ENCODE measurements at regions of chr16 and their contacts with region 1.

Region 1: GRCh38 chr16:28193530-28194423 is 18.0 kb downstream of the XPO6 start:
- DNase-seq: peak; percentile 56
- ATAC-seq: peak; percentile 26
- H3K4me3 Mint-ChIP-seq: peak overlapping the region; percentile 79
- H3K27ac Mint-ChIP-seq: peak overlapping the region; percentile 94
- H3K4me1 Mint-ChIP-seq: peaks cover 73% of the 10 kb centered on the region
- H3K27me3 Mint-ChIP-seq: no peaks in the 10 kb centered on the region

Region 2: DNA sequence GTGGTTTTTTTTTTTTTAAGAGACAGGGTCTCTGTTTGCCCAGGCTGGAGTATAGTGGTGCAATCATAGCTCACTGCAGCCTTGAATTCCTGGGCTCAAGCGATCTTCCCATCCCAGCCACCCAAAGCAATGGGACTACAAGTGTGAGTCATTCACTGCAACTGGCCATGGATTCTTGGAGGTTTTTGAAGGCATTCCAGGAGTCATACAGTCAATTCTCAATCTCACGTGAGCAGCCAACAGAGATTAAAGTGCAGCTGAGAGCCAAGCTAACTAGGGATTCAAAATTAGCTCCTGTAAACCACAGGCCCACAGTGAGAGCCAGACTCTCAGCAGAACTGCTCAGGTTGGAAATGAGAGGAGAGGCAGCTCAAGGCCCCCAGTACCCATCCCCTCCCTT is 12.3 kb before region 1 on chr16:
- POLR2A ChIA-PET with region 1: interaction called, 10 read pairs
- DNase-seq: no peak
- ATAC-seq: peak; percentile 15
- H3K4me3 Mint-ChIP-seq: peak overlapping the region; percentile 75
- H3K27ac Mint-ChIP-seq: peak overlapping the region; percentile 90
- H3K4me1 Mint-ChIP-seq: peaks cover 65% of the 10 kb centered on the region
- H3K27me3 Mint-ChIP-seq: no peaks in the 10 kb centered on the region

Measured in activated naive CD8-positive, alpha-beta T cell treated with anti-CD3 and anti-CD28 coated beads, Interleukin-2, amount 10 ng/mL, durations not matched to agents 7 days and 5 days (primary cell).